Activated CD4-positive, alpha-beta T cell treated with anti-CD3 and anti-CD28 coated beads, Interleukin-2, amount 10 ng/mL, durations not matched to agents 24 days and 14 days (primary cell): ENCODE measurements at regions of chr13 and their contacts with region 1.

Region 1: GRCh38 chr13:77143435-77143834 is 116.5 kb upstream of the FBXL3 start:
- DNase-seq: no peak
- H3K4me3 Mint-ChIP-seq: no peak overlapping the region
- H3K27ac Mint-ChIP-seq: no peak overlapping the region
- H3K4me1 Mint-ChIP-seq: no peaks in the 10 kb centered on the region
- H3K27me3 Mint-ChIP-seq: no peaks in the 10 kb centered on the region

Region 2: GRCh38 chr13:77124423-77124822 is 19.0 kb before region 1 on chr13:
- intact Hi-C with region 1: loop called (anchors 2 kb)
- DNase-seq: no peak
- H3K4me3 Mint-ChIP-seq: no peak overlapping the region
- H3K27ac Mint-ChIP-seq: no peak overlapping the region
- H3K4me1 Mint-ChIP-seq: peaks cover 4% of the 10 kb centered on the region
- H3K27me3 Mint-ChIP-seq: no peaks in the 10 kb centered on the region

Region 3: DNA sequence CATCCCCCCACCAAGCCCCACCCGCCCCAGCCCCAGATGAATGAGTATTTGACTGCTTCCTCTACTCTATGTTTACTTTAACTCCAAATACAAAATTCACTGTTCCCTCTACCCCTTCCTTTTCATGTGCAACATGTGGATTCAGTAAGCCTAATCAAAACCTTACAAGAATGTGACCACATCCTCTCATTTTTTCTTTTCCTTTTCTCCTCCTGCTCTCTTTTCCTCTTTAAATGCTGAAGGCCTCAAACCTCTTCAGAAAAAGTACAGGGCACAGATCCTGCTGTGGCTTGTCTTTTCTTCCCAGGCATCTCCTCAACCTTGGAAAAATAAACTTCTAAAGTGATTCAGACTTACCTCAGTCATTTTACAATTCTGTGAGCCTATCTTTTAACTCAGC is 64.5 kb after region 1 on chr13:
- intact Hi-C with region 1: no loop called
- DNase-seq: no peak
- H3K4me3 Mint-ChIP-seq: no peak overlapping the region
- H3K27ac Mint-ChIP-seq: peak overlapping the region; percentile 65
- H3K4me1 Mint-ChIP-seq: peaks cover 3% of the 10 kb centered on the region
- H3K27me3 Mint-ChIP-seq: no peaks in the 10 kb centered on the region